ENCODE measurements at regions of chr4 and their contacts with region 1.

Region 1: DNA sequence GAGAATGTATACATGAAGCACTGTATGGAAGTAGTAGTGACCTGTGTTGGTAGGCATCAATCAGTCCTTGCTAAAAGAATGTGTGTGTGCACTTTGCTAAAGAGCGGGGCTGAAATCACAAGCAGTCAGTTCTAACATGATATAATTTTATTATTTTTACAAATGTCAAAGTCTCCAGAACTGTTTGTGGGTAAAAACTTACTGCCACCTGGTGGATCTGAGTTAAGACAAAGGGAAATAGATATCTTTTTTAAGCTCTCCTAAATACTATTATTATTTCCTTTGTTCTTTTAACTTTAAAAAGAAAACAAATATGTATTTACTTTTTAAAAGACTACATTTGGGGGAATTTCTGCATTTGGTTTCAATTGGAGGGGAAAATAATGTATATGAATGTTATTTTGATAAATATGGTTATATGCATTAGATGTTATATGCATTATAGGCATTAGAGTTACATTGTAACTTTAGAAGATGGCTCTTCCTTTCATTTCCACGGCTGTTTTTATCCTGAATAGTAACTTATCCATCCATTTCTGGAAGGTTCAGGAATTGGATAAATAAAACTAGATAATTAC is 7.8 kb upstream of the CLOCK start:
- DNase-seq: no peak
- H3K4me3 ChIP-seq: no peak overlapping the region
- H3K27ac ChIP-seq: no peak overlapping the region
- H3K4me1 ChIP-seq: peaks cover 11% of the 10 kb centered on the region
- H3K27me3 ChIP-seq: no peaks in the 10 kb centered on the region
- CTCF ChIP-seq: peak; percentile 12 to 56

Region 2: DNA sequence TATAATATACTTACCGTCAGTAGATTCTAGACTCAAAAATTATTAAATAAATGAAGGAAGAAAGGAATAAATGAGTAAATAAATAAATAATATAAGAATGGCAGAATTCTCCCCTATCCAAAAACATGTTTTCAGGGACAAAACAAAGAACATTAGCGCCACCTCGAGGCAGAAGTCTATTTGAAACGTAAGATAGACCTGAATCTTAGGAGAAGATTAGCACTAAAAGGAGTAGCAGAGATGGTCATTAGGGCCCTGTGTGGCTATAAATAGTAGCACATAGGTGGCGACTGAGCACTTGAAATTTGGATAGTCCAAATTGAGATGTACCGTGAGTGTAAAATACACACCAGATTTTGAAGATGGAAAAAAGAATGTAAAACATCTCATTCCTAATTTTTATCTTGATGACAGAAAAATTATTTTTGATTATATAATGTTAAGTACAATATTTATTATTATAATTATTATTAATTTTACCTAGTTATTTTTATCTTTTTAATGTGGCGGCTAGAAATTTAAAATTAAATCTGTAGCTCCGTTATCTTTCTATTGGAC is 232.8 kb before region 1 on chr4:
- CTCF ChIA-PET with region 1: no interaction called
- dilution Hi-C with region 1: no loop called
- in situ Hi-C with region 1: no loop called
- intact Hi-C with region 1: loop called (anchors 2 kb)
- DNase-seq: peak; percentile 63
- H3K4me3 ChIP-seq: no peak overlapping the region
- H3K27ac ChIP-seq: no peak overlapping the region
- H3K4me1 ChIP-seq: no peaks in the 10 kb centered on the region
- H3K27me3 ChIP-seq: no peaks in the 10 kb centered on the region
- CTCF ChIP-seq: peak; percentile 61 to 73